ENCODE measurements at regions of chr13 and their contacts with region 1.

Region 1: DNA sequence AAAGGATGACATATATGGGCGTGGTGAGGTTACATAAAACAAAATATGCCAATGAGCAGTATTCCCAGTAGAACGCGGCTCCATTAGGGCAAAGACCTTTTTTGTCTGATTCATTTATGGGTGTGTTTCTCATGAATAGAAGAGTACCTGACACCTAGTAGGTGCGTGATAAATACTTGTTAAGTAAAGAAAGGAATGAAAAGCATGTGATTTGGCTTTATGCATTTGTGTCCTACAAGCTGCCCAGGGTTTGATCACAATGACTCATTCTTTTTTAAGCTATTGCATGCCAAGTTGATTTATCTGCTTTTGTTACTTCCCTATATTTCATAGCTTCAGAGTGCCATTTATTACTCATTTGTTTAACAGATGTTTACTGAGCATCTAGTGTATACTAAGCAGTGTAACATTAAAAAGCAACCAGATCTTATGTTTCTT is 19.1 kb upstream of the KCTD4 start:
- DNase-seq: peak; percentile 93
- ATAC-seq: peak; percentile 94
- H3K4me3 ChIP-seq: peak overlapping the region; percentile 45; the same call in 1 of the 2 replicates
- H3K27ac ChIP-seq: peak overlapping the region; percentile 91
- H3K4me1 ChIP-seq: peaks cover 31% of the 10 kb centered on the region
- H3K27me3 ChIP-seq: no peaks in the 10 kb centered on the region
- CTCF ChIP-seq: no peak

Region 2: GRCh38 chr13:45206340-45206739 is 13.6 kb before region 1 on chr13:
- CTCF ChIA-PET with region 1: no interaction called
- POLR2A ChIA-PET with region 1: no interaction called
- intact Hi-C with region 1: loop called (anchors 2 kb)
- DNase-seq: peak; percentile 89
- ATAC-seq: peak; percentile 96
- H3K4me3 ChIP-seq: no peak overlapping the region
- H3K27ac ChIP-seq: peak overlapping the region; percentile 80
- H3K4me1 ChIP-seq: peaks cover 50% of the 10 kb centered on the region
- H3K27me3 ChIP-seq: no peaks in the 10 kb centered on the region
- CTCF ChIP-seq: no peak

Region 3: DNA sequence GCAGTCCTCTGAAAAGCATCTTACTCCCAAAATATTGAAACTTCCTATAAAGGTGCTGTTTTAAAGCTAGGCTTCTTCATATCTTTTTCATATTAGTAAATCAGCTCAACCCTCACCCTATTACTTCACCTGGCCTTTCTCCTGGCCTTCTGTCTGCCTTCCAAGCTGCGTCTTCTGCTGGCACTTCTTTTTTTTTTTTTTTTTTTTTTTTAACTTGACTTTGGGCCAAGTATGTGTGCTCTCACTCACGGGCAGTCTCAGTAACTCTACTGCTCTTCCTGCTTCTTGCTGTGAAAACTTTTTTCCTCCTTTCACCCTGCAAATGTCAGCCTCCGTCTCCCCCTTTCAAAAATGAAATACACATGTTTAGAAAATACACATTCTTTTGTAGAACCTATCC is 22.1 kb after region 1 on chr13:
- CTCF ChIA-PET with region 1: no interaction called
- POLR2A ChIA-PET with region 1: interaction called, 10 read pairs
- intact Hi-C with region 1: no loop called
- DNase-seq: peak; percentile 12
- ATAC-seq: no peak
- H3K4me3 ChIP-seq: no peak overlapping the region
- H3K27ac ChIP-seq: no peak overlapping the region
- H3K4me1 ChIP-seq: no peaks in the 10 kb centered on the region
- H3K27me3 ChIP-seq: no peaks in the 10 kb centered on the region
- CTCF ChIP-seq: no peak

Measured in PC-3 (cell line).